Activated B cell treated with CpG ODN at 0.5 μM for 24 hours (primary cell): ENCODE measurements at regions of chr1 and their contacts with region 1.

Region 1: DNA sequence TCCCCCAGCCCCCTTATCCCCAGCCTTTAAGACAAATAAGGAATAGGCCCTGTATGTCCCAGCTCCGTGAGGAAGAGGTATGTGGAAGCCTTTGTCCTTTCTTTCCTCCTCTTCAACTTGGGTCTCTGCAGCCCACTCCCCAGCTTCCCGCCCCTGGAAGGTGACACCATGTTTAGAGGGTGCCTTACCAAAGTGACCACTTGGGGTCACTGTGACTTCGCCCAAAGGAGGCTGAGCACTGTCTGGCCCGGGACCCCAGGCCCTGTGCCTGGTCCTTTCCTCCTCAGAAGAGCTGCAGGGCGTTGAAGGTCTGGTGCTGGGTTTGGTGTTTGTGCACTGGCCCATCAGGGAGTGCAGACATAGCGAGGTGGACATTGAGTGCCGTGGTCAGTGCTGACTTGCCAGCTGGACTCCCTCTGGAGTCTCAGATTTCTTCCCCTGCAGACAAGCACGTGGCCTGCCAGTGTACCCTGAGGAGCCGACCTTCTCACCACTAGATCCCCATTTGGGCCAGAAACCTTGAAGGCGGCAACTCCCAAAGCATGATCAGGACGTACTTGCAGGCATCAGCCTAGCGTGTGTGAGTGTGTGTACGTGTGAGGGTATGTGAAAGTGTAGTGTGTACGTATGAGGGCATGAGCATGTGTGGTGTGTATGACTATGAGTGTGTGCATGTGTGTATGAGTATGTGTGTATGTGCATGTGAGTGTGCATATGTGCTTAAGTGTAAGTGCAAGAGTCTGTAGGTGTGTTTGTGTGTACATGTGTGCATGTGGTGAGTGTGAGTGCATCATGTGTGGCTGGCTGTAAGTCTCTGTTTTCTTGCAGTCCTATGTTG is 181.4 kb upstream of the KIAA0040 start:
- DNase-seq: no peak
- ATAC-seq: peak; percentile 31
- H3K4me3 Mint-ChIP-seq: no peak overlapping the region
- H3K27ac Mint-ChIP-seq: no peak overlapping the region
- H3K4me1 Mint-ChIP-seq: no peaks in the 10 kb centered on the region
- H3K27me3 Mint-ChIP-seq: peaks cover 3% of the 10 kb centered on the region
- CTCF ChIP-seq: no peak

Region 2: GRCh38 chr1:175742790-175743459 is 368.9 kb after region 1 on chr1:
- CTCF ChIA-PET with region 1: interaction called, 4 read pairs
- POLR2A ChIA-PET with region 1: no interaction called
- intact Hi-C with region 1: loop called (anchors 1 kb)
- DNase-seq: no peak
- ATAC-seq: no peak
- H3K4me3 Mint-ChIP-seq: no peak overlapping the region
- H3K27ac Mint-ChIP-seq: no peak overlapping the region
- H3K4me1 Mint-ChIP-seq: peaks cover 3% of the 10 kb centered on the region
- H3K27me3 Mint-ChIP-seq: peaks cover 29% of the 10 kb centered on the region
- CTCF ChIP-seq: no peak

Region 3: DNA sequence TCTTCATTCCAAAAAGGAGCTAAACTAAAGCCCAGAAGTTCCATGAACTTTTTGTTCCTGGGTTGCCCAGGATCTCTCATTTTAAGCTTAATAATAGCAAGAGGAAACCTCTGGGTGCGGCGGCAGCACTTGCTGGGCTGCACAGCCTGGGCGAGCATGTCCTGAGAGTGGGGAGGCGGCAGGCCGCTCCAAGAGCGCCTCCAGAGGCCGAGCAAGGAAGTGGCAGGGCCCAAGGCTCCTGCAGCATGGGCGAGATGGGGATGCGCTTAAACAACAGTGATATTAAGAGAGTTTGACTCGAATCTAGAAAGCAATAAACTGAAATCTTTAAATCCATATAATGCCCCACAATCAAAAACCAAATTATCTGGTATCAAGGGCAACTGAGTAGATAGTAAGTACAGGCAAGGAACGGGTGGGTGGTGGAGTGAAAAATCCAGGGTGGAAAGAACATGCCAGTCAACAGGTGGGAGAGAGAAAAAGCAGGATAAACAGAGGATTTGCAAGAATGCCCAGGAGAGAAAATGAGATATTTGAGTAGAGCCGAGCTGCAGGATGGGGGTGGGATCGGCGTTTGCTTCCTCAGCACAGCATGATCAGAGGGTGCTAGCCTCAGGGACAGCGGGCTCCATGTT is 383.5 kb after region 1 on chr1:
- CTCF ChIA-PET with region 1: interaction called, 3 read pairs
- POLR2A ChIA-PET with region 1: no interaction called
- intact Hi-C with region 1: loop called (anchors 5 kb)
- DNase-seq: no peak
- ATAC-seq: peak; percentile 52
- H3K4me3 Mint-ChIP-seq: no peak overlapping the region
- H3K27ac Mint-ChIP-seq: no peak overlapping the region
- H3K4me1 Mint-ChIP-seq: no peaks in the 10 kb centered on the region
- H3K27me3 Mint-ChIP-seq: peaks cover 4% of the 10 kb centered on the region
- CTCF ChIP-seq: no peak

Region 4: DNA sequence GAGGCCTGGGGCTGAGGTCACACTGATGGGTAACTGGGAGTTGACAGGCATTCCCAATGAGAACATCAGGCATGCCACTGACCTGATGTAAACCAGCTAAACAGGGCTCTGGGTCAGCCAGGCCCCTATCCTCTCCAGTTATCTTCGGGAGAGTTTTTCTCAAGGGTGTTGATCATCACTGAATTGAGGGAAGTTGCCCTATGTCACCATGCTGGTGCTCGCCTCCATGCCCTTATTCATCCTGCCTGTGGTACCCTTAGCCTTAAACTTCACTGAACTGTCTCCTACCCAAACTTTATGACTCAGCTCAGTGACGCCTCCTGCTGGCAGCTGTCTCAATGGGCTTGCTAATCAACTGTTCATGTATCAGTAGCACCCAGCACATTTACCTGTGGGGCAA is 450.1 kb after region 1 on chr1:
- CTCF ChIA-PET with region 1: interaction called, 4 read pairs
- POLR2A ChIA-PET with region 1: no interaction called
- intact Hi-C with region 1: loop called (anchors 5 kb)
- DNase-seq: no peak
- ATAC-seq: no peak
- H3K4me3 Mint-ChIP-seq: no peak overlapping the region
- H3K27ac Mint-ChIP-seq: no peak overlapping the region
- H3K4me1 Mint-ChIP-seq: no peaks in the 10 kb centered on the region
- H3K27me3 Mint-ChIP-seq: peaks cover 3% of the 10 kb centered on the region
- CTCF ChIP-seq: no peak

Region 5: GRCh38 chr1:175887981-175888433 is 514.0 kb after region 1 on chr1:
- CTCF ChIA-PET with region 1: no interaction called
- POLR2A ChIA-PET with region 1: no interaction called
- intact Hi-C with region 1: loop called (anchors 5 kb)
- DNase-seq: no peak
- ATAC-seq: peak; percentile 37
- H3K4me3 Mint-ChIP-seq: no peak overlapping the region
- H3K27ac Mint-ChIP-seq: no peak overlapping the region
- H3K4me1 Mint-ChIP-seq: no peaks in the 10 kb centered on the region
- H3K27me3 Mint-ChIP-seq: peaks cover 3% of the 10 kb centered on the region
- CTCF ChIP-seq: no peak

Region 6: DNA sequence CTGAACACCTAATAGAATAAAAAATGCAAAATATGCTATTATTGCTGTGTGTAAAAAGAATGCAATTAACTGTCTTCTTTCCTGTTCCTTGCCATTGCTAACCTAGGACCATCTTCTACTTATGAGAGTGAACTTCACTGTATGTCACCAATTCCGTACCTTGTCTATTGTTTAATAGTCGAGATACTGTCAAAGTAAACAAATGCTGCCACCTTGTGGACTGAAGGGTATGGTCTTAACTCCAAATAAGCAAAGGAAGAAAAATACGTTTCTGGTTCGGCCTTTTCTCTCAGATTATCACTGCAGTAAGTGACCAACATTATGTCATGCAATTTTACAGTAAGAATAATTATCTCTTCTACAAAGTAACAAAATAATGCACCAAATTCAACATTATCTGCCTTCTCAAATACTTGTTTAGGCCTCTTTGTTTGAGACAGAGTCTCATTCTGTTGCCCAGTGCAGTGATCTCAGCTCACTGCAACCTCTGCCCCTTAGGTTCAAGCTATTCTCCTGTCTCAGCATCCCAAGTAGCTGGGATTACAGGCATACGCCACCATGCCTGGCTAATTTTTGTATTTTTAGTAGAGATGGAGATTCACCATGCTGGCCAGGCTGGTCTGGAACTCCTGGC is 699.6 kb after region 1 on chr1:
- CTCF ChIA-PET with region 1: interaction called, 7 read pairs
- POLR2A ChIA-PET with region 1: no interaction called
- intact Hi-C with region 1: loop called (anchors 1 kb)
- DNase-seq: no peak
- ATAC-seq: no peak
- H3K4me3 Mint-ChIP-seq: no peak overlapping the region
- H3K27ac Mint-ChIP-seq: no peak overlapping the region
- H3K4me1 Mint-ChIP-seq: peaks cover 7% of the 10 kb centered on the region
- H3K27me3 Mint-ChIP-seq: no peaks in the 10 kb centered on the region
- CTCF ChIP-seq: no peak

Region 7: GRCh38 chr1:176374967-176375569 is 1001.1 kb after region 1 on chr1:
- CTCF ChIA-PET with region 1: no interaction called
- POLR2A ChIA-PET with region 1: no interaction called
- intact Hi-C with region 1: loop called (anchors 10 kb)
- DNase-seq: peak; percentile 22
- ATAC-seq: peak; percentile 49
- H3K4me3 Mint-ChIP-seq: no peak overlapping the region
- H3K27ac Mint-ChIP-seq: no peak overlapping the region
- H3K4me1 Mint-ChIP-seq: no peaks in the 10 kb centered on the region
- H3K27me3 Mint-ChIP-seq: peaks cover 6% of the 10 kb centered on the region
- CTCF ChIP-seq: no peak